HCT116 (cell line): ENCODE measurements at regions of chr18 and their contacts with region 1.

Region 1: GRCh38 chr18:58117786-58118403 is 73.9 kb downstream of the NEDD4L start:
- DNase-seq: peak; percentile 34
- ATAC-seq: peak; percentile 57
- H3K4me3 ChIP-seq: no peak overlapping the region
- H3K27ac ChIP-seq: no peak overlapping the region
- H3K4me1 ChIP-seq: peaks cover 12 to 16% of the 10 kb centered on the region in 2 experiments
- H3K27me3 ChIP-seq: no peaks in the 10 kb centered on the region
- CTCF ChIP-seq: no peak
- POLR2A ChIP-seq: no peak
- RAD21 ChIP-seq: no peak

Region 2: DNA sequence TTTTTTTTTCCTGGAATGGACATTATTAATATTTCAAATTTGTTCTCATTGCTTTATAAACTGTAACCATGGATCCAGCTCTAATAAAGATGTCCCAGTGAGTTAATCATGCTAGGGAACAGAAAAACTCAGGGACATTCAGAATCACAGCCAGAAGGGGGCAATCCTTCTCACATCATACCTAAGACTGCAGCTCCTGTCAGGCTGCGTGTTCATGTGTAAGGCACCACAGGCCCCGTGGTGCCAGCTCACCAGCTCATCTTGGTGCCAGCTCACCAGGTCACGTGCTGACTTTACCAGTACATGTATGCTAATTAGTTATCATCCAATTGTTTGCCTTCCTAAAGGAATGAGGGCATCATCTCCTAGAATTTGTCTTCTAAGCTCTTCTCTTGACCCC is 158.6 kb before region 1 on chr18:
- CTCF ChIA-PET with region 1: interaction called, 35 read pairs
- POLR2A ChIA-PET with region 1: interaction called, 3 read pairs
- RAD21 ChIA-PET with region 1: interaction called, 6 to 10 read pairs
- intact Hi-C with region 1: loop called (anchors 1 kb)
- DNase-seq: peak; percentile 72
- ATAC-seq: peak; percentile 99
- H3K4me3 ChIP-seq: no peak overlapping the region
- H3K27ac ChIP-seq: no peak overlapping the region
- H3K4me1 ChIP-seq: no peaks in the 10 kb centered on the region
- H3K27me3 ChIP-seq: peaks cover 3% of the 10 kb centered on the region; the same call in 1 of the 2 replicates
- CTCF ChIP-seq: peak; percentile 52 to 64 (median 58); a peak in 5 of 6 replicates
- POLR2A ChIP-seq: no peak
- RAD21 ChIP-seq: peak; percentile 69

Region 3: DNA sequence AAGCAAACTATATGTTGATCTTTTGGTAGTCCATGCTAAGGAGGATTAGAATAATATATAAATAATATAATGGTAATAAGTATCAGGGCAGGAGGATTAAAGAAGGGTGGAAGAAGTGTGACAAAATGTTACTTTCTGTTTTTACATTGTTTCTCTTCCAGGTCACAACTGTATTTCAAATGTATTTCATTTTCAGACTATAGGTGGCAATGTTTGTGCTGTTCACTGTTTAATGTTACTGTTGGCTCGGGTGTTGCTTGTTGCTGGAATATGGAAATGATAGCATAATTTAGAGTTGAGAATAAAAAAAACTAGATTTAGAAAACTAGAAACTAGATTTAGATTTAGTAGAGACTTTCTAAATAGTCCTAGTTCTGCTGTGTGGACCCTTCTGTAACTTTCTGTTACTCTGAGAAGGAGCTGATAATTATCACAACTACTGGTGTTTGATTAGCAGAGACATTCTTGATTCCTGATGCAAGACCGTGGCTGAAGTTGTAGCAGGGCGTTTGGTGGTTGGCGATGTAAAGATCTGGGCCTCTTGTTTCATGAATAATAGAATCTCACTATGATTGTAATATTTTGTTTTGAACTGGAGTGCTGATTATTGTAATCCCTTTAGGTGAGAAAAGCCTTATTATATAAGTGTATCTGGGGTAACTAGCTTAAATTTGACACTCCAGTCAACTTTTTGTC is 66.0 kb before region 1 on chr18:
- CTCF ChIA-PET with region 1: interaction called, 24 read pairs
- POLR2A ChIA-PET with region 1: interaction called, 3 read pairs
- RAD21 ChIA-PET with region 1: no interaction called
- intact Hi-C with region 1: no loop called
- DNase-seq: no peak
- ATAC-seq: peak; percentile 58; the same call in 1 of the 2 replicates
- H3K4me3 ChIP-seq: no peak overlapping the region
- H3K27ac ChIP-seq: no peak overlapping the region
- H3K4me1 ChIP-seq: peaks cover 8 to 9% of the 10 kb centered on the region in 2 experiments; a peak in 3 of 4 replicates
- H3K27me3 ChIP-seq: no peaks in the 10 kb centered on the region
- CTCF ChIP-seq: peak; percentile 24 to 29 (median 24); a peak in 3 of 6 replicates
- POLR2A ChIP-seq: no peak
- RAD21 ChIP-seq: peak; percentile 48; the same call in 1 of the 2 replicates

Region 4: DNA sequence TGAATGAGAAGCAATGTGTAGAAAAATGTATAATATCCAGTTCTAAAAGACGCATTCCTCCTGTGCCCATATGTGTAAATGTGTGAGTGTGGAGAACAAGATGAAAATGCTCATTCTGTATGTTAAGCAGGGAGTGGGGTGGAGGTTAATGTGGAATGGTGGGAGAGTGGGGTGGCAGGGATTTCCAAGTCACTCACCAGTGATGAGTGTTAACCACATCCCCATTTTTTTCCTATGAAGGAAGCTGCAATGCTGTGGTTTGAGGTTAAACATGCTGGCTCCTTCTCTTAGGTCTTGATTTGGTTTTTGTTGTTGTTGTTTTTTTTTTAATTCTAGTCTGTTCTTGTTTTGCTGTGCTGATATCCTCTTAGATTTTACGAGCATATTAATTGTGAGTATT is 95.5 kb after region 1 on chr18:
- CTCF ChIA-PET with region 1: no interaction called
- POLR2A ChIA-PET with region 1: no interaction called
- RAD21 ChIA-PET with region 1: no interaction called
- intact Hi-C with region 1: no loop called
- DNase-seq: no peak
- ATAC-seq: no peak
- H3K4me3 ChIP-seq: no peak overlapping the region
- H3K27ac ChIP-seq: no peak overlapping the region
- H3K4me1 ChIP-seq: peaks cover 13 to 47% of the 10 kb centered on the region in 2 experiments
- H3K27me3 ChIP-seq: no peaks in the 10 kb centered on the region
- CTCF ChIP-seq: no peak
- POLR2A ChIP-seq: no peak
- RAD21 ChIP-seq: no peak

Region 5: GRCh38 chr18:58429442-58429841 is 311.5 kb after region 1 on chr18:
- CTCF ChIA-PET with region 1: no interaction called
- POLR2A ChIA-PET with region 1: no interaction called
- RAD21 ChIA-PET with region 1: no interaction called
- intact Hi-C with region 1: no loop called
- DNase-seq: no peak
- ATAC-seq: no peak
- H3K4me3 ChIP-seq: no peak overlapping the region
- H3K27ac ChIP-seq: no peak overlapping the region
- H3K4me1 ChIP-seq: peaks cover 12 to 13% of the 10 kb centered on the region in 2 experiments; a peak in 3 of 4 replicates
- H3K27me3 ChIP-seq: no peaks in the 10 kb centered on the region
- CTCF ChIP-seq: no peak
- POLR2A ChIP-seq: no peak
- RAD21 ChIP-seq: no peak